Activated CD4-positive, alpha-beta memory T cell treated with anti-CD3 and anti-CD28 coated beads for 36 hours (primary cell): ENCODE measurements at regions of chr2 and their contacts with region 1.

Region 1: GRCh38 chr2:85826990-85827878 is 61.6 kb downstream of the ST3GAL5 start:
- DNase-seq: peak; percentile 86
- H3K4me3 Mint-ChIP-seq: no peak overlapping the region
- H3K27ac Mint-ChIP-seq: no peak overlapping the region
- H3K4me1 Mint-ChIP-seq: peaks cover 15% of the 10 kb centered on the region
- H3K27me3 Mint-ChIP-seq: peaks cover 3% of the 10 kb centered on the region

Region 2: GRCh38 chr2:85368921-85369320 is 458.3 kb before region 1 on chr2:
- CTCF ChIA-PET with region 1: no interaction called
- POLR2A ChIA-PET with region 1: no interaction called
- intact Hi-C with region 1: no loop called
- DNase-seq: no peak
- H3K4me3 Mint-ChIP-seq: no peak overlapping the region
- H3K27ac Mint-ChIP-seq: no peak overlapping the region
- H3K4me1 Mint-ChIP-seq: no peaks in the 10 kb centered on the region
- H3K27me3 Mint-ChIP-seq: no peaks in the 10 kb centered on the region

Region 3: DNA sequence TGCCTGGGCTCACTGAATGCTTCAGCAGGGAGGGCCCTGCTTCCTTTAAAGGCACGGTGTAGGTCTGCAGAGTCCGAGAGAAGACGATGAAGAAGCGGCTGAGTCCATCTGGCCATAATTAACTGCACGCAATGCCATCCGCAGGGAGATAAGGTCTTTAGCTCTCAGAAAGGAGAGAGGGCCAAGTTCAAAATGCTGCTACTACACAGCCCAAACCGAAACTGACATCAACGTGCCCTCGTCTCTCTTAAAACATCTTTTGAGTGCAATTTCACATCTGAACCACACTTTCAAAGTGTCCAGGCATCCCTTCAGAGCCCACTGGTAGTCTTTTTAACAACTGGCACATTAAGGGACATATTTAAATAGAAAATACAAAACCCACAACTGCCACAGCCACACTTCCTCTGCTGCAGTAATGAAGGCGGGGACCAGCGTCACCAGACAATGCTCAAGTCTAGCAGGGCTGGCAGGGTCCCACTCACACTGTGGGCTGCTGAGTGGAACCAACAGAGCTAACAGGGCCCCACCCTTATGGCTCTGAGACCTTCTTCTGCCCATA is 25.8 kb after region 1 on chr2:
- CTCF ChIA-PET with region 1: interaction called, 10 read pairs
- POLR2A ChIA-PET with region 1: no interaction called
- intact Hi-C with region 1: loop called (anchors 2 kb)
- DNase-seq: peak; percentile 69
- H3K4me3 Mint-ChIP-seq: peak overlapping the region; percentile 77
- H3K27ac Mint-ChIP-seq: peak overlapping the region; percentile 98
- H3K4me1 Mint-ChIP-seq: peaks cover 71% of the 10 kb centered on the region
- H3K27me3 Mint-ChIP-seq: no peaks in the 10 kb centered on the region

Region 4: GRCh38 chr2:85865539-85866164 is 38.4 kb after region 1 on chr2:
- CTCF ChIA-PET with region 1: interaction called, 12 read pairs
- POLR2A ChIA-PET with region 1: no interaction called
- intact Hi-C with region 1: loop called (anchors 2 kb)
- DNase-seq: peak; percentile 71
- H3K4me3 Mint-ChIP-seq: no peak overlapping the region
- H3K27ac Mint-ChIP-seq: no peak overlapping the region
- H3K4me1 Mint-ChIP-seq: peaks cover 60% of the 10 kb centered on the region
- H3K27me3 Mint-ChIP-seq: no peaks in the 10 kb centered on the region

Region 5: DNA sequence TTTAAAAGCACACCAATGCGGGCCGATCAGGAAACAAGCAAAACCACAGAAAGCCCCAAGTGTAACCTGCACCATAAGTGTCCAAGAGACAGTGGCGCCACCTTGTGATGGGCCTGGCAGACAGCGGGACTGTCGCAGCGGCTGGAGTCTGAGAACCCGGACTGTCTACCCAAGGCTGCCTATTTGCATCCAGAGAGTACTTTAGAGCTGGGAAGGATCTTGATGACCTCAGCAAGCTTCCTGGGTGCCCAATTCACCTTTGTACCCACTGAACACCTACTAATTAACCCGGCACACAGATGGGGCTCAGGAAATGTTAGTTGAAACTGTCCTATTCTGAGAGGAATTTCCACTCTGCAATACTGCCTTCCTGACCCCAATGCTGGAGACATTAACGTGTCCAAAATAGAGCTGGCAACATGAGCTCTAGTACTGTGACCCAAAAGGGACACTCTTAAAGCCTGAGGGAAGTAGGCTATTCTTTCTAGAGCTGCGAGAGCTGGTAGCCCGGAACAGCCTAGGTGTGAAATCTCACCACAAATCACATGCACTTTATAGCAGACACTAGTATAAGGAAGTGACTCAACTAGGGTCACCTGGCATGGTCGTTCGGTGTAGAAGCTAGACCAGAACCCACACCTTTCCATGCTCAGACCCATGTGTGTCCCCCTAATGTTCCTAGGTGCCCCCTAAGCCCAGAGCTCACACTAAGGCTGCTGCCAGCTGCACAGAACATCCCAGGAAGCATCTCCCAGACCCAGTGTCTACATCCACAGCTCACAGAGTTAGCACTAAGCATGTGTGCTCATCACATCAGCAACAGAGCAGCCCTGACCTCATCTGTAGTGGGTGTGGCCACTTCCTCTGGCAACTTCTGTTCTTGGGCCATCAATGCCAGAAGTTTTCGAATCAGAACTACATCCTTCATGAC is 253.0 kb after region 1 on chr2:
- CTCF ChIA-PET with region 1: interaction called, 179 read pairs
- POLR2A ChIA-PET with region 1: interaction called, 5 read pairs
- intact Hi-C with region 1: loop called (anchors 1 kb)
- DNase-seq: peak; percentile 86
- H3K4me3 Mint-ChIP-seq: no peak overlapping the region
- H3K27ac Mint-ChIP-seq: peak overlapping the region; percentile 65
- H3K4me1 Mint-ChIP-seq: peaks cover 27% of the 10 kb centered on the region
- H3K27me3 Mint-ChIP-seq: no peaks in the 10 kb centered on the region